Activated CD8-positive, alpha-beta T cell treated with anti-CD3 and anti-CD28 coated beads for 36 hours (primary cell): ENCODE measurements at regions of chr13 and their contacts with region 1.

Region 1: DNA sequence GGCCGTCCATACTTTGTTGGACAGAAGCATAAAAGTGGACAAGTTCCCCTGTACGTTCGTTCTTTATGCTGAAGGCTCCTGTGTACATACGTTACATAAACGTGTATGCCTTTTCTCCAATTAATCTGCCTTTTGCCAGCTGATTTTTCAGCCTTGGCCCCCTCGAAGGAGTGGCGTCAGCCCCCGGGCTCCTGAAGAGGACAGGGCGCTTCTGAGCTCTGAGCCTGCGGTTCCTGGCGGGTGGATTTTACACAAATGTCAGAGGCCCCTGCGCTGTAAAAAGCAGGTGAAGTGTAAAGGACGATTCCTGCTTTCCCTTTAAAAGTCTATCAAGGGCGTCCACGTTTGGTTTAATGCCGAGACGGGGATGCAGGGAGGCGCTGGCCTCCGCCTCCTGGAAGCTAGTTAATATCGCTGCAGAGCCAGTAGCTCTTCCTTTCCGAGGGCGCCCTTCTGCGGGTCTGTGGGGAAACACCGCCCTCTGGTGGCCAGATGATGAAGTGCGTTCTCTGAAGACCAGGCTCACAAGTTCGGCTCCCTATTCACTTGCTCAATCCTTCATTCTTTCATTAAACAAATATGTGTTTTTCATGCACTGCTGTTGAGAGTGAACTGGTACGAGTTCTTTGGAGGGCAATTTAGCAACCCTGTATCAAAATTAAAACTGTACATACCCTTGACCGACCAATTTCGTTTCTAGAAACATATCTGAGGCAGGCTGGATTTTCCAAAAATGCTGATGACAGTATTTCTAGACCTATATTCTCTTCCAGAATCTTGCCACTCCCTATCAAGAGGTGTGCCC is 62.0 kb downstream of the GPR12 start:
- DNase-seq: peak; percentile 87
- ATAC-seq: peak; percentile 79
- H3K4me3 Mint-ChIP-seq: no peak overlapping the region
- H3K27ac Mint-ChIP-seq: no peak overlapping the region
- H3K4me1 Mint-ChIP-seq: no peaks in the 10 kb centered on the region
- H3K27me3 Mint-ChIP-seq: peaks cover 2% of the 10 kb centered on the region
- CTCF ChIP-seq: peak; percentile 90

Region 2: DNA sequence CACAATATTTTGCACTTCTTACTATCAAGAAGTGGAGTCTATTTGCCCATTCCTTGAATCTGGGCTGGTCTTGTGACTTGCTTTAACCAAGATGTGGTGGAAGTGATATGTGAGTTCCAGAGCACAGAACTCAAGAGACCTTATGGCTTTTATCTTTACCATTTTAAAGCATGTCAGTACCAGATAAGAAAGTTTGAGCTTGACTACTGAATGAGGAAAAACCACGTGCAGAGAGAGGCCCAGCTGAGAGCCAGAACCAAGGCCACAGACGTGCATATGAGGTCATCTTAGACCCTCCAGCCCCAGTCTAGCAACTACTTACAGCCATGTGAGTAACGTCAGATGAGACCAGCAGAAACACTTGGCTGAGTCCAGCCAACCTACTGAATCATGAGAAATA is 451.0 kb before region 1 on chr13:
- CTCF ChIA-PET with region 1: no interaction called
- POLR2A ChIA-PET with region 1: no interaction called
- intact Hi-C with region 1: no loop called
- DNase-seq: no peak
- ATAC-seq: no peak
- H3K4me3 Mint-ChIP-seq: no peak overlapping the region
- H3K27ac Mint-ChIP-seq: no peak overlapping the region
- H3K4me1 Mint-ChIP-seq: no peaks in the 10 kb centered on the region
- H3K27me3 Mint-ChIP-seq: no peaks in the 10 kb centered on the region
- CTCF ChIP-seq: no peak

Region 3: GRCh38 chr13:26482451-26483197 is 216.0 kb before region 1 on chr13:
- CTCF ChIA-PET with region 1: interaction called, 25 read pairs
- POLR2A ChIA-PET with region 1: no interaction called
- intact Hi-C with region 1: no loop called
- DNase-seq: peak; percentile 80
- ATAC-seq: peak; percentile 97
- H3K4me3 Mint-ChIP-seq: no peak overlapping the region
- H3K27ac Mint-ChIP-seq: no peak overlapping the region
- H3K4me1 Mint-ChIP-seq: peaks cover 11% of the 10 kb centered on the region
- H3K27me3 Mint-ChIP-seq: no peaks in the 10 kb centered on the region
- CTCF ChIP-seq: peak; percentile 91

Region 4: DNA sequence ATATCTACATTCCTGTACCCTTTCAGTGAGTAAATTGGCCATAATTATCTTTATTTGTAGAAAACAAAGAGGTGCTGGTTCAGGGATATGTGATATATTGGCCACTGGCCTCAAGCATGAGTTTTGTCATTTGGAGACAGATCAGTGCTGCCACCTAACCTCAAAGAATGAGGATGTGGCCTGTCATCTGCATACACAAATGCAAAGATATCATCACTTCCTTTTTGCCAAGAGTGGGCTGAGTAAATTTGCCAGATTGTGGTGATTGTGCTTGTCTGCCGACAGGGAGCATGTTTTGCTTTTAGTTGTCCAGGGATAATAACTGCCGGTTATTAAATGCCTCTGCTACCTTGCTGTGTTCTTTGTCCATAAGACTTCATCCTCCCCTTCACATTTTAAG is 96.9 kb before region 1 on chr13:
- CTCF ChIA-PET with region 1: interaction called, 12 read pairs
- POLR2A ChIA-PET with region 1: no interaction called
- intact Hi-C with region 1: no loop called
- DNase-seq: peak; percentile 31
- ATAC-seq: peak; percentile 74
- H3K4me3 Mint-ChIP-seq: no peak overlapping the region
- H3K27ac Mint-ChIP-seq: no peak overlapping the region
- H3K4me1 Mint-ChIP-seq: peaks cover 3% of the 10 kb centered on the region
- H3K27me3 Mint-ChIP-seq: peaks cover 10% of the 10 kb centered on the region
- CTCF ChIP-seq: no peak

Region 5: DNA sequence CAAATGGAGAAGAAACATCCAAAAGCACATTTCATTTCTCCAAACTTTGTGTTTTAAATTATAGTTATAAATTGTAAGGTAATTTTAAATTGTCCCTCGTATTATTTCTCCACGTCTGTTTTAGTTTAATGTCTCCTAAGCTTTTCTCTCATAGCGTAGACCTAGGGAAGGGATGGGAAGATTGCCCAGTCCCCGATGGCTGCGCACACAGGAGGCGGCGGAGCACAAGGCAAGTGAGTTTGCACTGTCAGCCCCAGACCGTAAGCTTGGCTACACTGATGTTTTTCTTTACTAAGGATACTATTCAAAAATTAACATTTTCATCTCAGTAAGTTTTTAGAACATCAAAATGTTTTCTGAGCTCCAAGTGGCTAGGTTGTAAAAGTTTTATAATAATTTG is 10.3 kb before region 1 on chr13:
- CTCF ChIA-PET with region 1: interaction called, 20 read pairs
- POLR2A ChIA-PET with region 1: no interaction called
- intact Hi-C with region 1: no loop called
- DNase-seq: no peak
- ATAC-seq: no peak
- H3K4me3 Mint-ChIP-seq: no peak overlapping the region
- H3K27ac Mint-ChIP-seq: no peak overlapping the region
- H3K4me1 Mint-ChIP-seq: no peaks in the 10 kb centered on the region
- H3K27me3 Mint-ChIP-seq: peaks cover 3% of the 10 kb centered on the region
- CTCF ChIP-seq: no peak

Region 6: DNA sequence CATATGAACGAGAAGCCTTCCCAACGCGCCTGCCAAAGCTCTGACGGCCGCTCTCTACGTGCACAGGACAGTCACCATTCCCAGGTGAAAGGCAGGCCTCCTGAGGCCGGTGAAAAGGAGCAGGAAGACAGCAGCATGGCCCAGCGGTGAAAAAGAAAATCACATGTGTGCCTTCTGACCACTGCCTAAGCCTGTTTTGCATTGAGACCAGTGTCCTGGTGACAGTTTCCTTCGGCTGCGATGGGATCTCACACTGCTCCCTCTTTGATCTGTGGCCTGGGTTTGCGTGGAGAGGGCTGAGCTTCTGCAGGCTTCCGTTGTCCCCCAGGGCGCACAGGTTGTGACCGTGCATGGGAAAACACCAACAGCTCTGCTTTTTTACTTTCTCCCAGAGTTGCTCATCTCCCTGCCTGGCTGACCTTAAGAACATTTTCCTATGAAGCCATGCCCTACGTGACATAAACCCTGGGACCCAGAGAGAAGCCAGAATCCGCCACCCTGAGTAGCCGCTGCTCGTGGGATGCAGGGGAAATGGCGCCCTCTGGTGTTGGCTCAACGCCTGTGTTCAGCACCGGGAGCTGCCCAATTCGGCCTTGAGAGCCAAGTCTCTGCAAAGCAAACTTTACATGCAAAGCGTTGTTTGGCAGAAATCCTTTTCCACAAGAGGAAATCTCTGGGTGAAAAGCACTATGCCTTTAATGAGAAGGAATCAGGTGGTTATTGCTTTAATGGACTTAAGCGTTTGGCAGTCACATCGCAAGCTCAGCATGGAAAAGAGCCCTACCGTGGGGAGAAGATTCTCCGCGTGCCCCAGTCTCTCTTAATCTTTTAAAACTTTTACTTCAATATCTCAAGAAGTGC is 174.2 kb after region 1 on chr13:
- CTCF ChIA-PET with region 1: interaction called, 38 read pairs
- POLR2A ChIA-PET with region 1: no interaction called
- intact Hi-C with region 1: no loop called
- DNase-seq: peak; percentile 80
- ATAC-seq: peak; percentile 65
- H3K4me3 Mint-ChIP-seq: no peak overlapping the region
- H3K27ac Mint-ChIP-seq: no peak overlapping the region
- H3K4me1 Mint-ChIP-seq: no peaks in the 10 kb centered on the region
- H3K27me3 Mint-ChIP-seq: no peaks in the 10 kb centered on the region
- CTCF ChIP-seq: peak; percentile 72